ENCODE measurements at regions of chr2 and their contacts with region 1.

Region 1: DNA sequence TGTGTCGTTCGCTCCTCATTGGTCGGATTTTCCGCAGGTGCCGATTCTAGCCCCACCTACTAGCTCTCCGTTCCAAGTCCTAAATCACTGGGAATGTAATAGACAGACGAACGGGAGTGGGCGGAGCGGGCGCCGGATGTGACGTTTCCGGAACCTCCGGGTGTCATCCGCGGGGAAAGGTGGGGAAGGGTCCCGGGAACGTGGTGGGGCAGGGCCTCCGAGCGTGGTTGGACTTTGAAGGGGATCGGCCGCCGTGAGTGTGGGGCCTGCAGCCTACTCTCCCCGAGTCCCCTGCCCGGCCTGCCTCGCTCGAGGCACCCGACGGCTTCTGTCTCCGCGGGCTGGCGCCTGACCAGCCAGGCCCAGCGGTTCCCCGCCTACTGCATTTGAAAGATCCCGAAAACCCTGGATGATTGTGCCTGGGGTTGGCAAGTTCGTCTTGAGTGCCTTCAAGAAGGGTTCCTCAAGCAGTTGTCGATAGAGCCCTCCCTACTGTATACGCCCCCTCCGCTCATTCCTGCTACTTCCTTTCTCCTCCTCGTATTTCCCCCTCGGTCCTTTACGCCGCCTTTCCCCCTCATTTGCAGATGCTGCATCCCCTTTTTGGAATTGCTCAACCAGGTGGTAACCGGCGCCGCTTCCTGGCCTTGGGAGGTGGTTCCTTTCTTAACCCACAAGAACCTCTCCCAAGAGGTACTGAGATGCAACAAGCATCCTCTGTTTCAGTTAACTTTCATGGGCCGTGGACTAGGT is at the start of gene STAMBP:
- DNase-seq: peak; percentile 99
- H3K4me3 ChIP-seq: peak within 1 kb of the TSS; percentile 62 to 87 (median 68)
- H3K27ac ChIP-seq: peak within 1 kb of the TSS; percentile 95 to 98 (median 96)
- H3K4me1 ChIP-seq: peaks cover 0 to 62% (median 51%) of the 10 kb centered on the region in 4 donors
- H3K27me3 ChIP-seq: no peaks in the 10 kb centered on the region
- CTCF ChIP-seq: no peak
- EP300 ChIP-seq: no peak
- POLR2A ChIP-seq: peak; percentile 74 to 86
- total RNA-seq, gene STAMBP: 23.5 to 37.0 (median 27.4) TPM

Region 2: DNA sequence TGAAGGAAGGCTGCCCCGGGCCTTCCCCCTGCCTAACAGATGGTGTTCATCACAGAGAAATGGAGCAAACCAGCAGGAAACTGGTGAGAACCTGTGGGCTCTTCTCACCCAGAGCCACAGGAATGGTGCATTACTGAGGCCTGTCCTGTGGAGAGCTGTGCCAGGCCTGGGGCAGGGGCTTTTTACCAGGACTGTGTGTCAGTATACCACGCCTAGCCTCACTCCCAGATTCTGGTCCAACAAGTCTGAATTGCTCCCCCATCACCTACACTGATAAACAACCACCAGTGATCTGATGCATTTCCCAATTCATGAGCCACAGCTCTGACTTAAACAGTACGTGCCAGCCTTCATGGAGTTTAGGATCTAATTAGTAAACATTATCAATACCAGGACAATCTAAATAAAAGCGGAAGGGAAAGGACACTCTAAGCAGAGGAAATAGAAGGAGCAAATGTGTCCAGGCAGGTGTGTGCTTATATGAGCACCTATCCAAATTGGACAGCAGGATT is 88.8 kb after region 1 on chr2:
- intact Hi-C with region 1: loop called (anchors 5 kb)
- DNase-seq: no peak
- H3K4me3 ChIP-seq: no peak overlapping the region
- H3K27ac ChIP-seq: peak overlapping the region; percentile 41 to 99 (median 82)
- H3K4me1 ChIP-seq: no peaks in the 10 kb centered on the region
- H3K27me3 ChIP-seq: no peaks in the 10 kb centered on the region
- CTCF ChIP-seq: no peak
- EP300 ChIP-seq: no peak
- POLR2A ChIP-seq: no peak

Region 3: GRCh38 chr2:73985308-73986084 is 156.5 kb after region 1 on chr2:
- intact Hi-C with region 1: loop called (anchors 10 kb)
- DNase-seq: peak; percentile 72
- H3K4me3 ChIP-seq: peak overlapping the region; percentile 41 to 73 (median 63)
- H3K27ac ChIP-seq: peak overlapping the region; percentile 57 to 73 (median 65)
- H3K4me1 ChIP-seq: peaks cover 0 to 62% (median 50%) of the 10 kb centered on the region in 4 donors
- H3K27me3 ChIP-seq: peaks cover 0 to 2% (median 0%) of the 10 kb centered on the region in 3 donors
- CTCF ChIP-seq: no peak
- EP300 ChIP-seq: no peak
- POLR2A ChIP-seq: no peak

Region 4: DNA sequence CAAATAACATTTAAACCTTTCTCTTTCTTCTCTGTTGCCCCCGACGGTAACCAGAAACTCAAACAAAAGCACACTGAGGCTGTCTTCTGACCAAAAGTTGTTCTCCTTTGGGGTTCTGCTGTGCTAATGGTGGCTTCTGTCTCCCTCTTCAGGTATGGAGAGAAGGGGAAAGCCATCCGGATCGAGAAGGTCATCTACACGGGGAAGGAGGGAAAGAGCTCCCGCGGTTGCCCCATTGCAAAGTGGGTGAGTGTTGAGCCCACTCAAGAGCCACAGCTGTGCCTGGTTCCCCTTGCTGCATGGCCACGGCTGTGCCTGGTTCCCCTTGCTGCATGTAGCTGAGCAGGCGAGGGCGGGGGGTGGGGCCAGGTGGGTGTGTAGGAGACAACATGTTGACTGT is 251.4 kb after region 1 on chr2:
- intact Hi-C with region 1: loop called (anchors 10 kb)
- DNase-seq: no peak
- H3K4me3 ChIP-seq: peak overlapping the region in 3 of 4 donors; percentile 7 to 26 (median 20)
- H3K27ac ChIP-seq: peak overlapping the region; percentile 5 to 62 (median 45)
- H3K4me1 ChIP-seq: peaks cover 0 to 15% (median 4%) of the 10 kb centered on the region in 4 donors
- H3K27me3 ChIP-seq: no peaks in the 10 kb centered on the region
- CTCF ChIP-seq: peak in 1 of 4 experiments; percentile 47
- EP300 ChIP-seq: no peak
- POLR2A ChIP-seq: no peak

Region 5: DNA sequence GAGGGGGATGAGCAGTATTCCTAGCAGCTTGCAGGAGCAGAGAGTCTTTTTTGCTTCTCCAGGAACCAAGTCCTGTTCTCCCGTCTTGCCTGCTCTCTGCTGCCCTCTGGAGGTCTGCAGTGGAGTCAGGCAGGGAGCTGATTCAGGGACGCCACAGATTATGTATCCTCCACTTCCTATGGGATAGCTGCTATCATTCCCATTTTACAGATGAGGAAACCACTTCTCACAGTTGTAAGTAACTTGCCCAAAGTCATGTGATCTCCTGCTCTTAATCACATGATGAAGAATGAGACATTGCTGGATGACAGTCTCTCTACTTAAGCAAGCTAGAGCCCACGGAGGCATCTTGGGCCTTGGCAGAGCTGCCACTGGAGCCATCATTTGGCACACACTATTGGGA is 505.9 kb after region 1 on chr2:
- intact Hi-C with region 1: loop called (anchors 10 kb)
- DNase-seq: peak; percentile 73
- H3K4me3 ChIP-seq: no peak overlapping the region
- H3K27ac ChIP-seq: no peak overlapping the region
- H3K4me1 ChIP-seq: no peaks in the 10 kb centered on the region
- H3K27me3 ChIP-seq: no peaks in the 10 kb centered on the region
- CTCF ChIP-seq: peak; percentile 41 to 96 (median 76)
- EP300 ChIP-seq: no peak
- POLR2A ChIP-seq: no peak

Region 6: DNA sequence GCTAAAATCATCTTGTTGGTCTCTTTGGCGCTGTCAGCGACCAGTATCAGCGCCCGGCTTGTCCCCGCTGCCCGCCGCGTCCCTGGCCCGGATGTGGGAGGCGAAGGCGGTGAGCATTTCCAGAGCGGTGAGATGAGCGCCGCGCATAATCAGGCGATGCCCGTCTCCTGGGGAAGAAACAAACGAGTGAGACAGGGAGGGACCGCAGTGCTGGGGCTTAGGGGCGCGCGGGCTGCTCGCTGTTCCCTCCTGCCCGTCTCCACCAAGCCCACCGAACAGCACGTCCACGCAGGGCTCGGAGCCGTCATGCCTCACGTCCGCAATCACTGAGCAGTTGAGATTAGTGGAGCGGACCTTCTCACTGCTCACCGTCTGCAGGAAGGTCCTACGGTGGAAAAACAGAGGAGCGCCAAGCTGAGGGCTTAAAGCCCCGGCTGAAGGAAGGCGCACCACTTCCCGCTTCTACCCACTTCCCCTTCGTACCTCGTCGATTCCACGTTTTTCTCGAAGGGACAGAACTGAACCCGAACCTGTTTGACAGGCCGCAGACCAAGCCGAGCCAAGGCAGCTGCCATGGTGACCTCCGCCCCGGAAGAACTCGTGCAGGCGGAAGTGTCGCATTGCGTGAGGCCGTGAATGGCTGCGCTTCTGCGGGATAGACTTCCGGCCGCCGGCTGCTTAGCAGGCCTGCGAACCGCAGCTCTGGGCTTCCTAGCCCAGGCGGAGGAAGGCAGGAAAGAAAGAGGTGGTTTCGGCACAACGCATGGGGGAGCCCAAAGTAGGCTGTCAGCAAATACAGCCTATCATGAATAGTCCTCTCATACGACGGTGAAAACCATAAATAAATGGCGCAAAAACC is 643.3 kb after region 1 on chr2 and contains the start of gene MRPL53:
- intact Hi-C with region 1: loop called (anchors 10 kb)
- DNase-seq: peak; percentile 96
- H3K4me3 ChIP-seq: peak within 1 kb of the TSS; percentile 43 to 71 (median 64)
- H3K27ac ChIP-seq: peak within 1 kb of the TSS; percentile 85 to 92 (median 88)
- H3K4me1 ChIP-seq: peaks cover 0 to 23% (median 21%) of the 10 kb centered on the region in 4 donors
- H3K27me3 ChIP-seq: no peaks in the 10 kb centered on the region
- CTCF ChIP-seq: no peak
- EP300 ChIP-seq: no peak
- POLR2A ChIP-seq: peak; percentile 82 to 85
- total RNA-seq, gene MRPL53: 10.2 to 77.1 (median 36.7) TPM